Calu3 (cell line): ENCODE measurements at regions of chr6 and their contacts with region 1.

Region 1: DNA sequence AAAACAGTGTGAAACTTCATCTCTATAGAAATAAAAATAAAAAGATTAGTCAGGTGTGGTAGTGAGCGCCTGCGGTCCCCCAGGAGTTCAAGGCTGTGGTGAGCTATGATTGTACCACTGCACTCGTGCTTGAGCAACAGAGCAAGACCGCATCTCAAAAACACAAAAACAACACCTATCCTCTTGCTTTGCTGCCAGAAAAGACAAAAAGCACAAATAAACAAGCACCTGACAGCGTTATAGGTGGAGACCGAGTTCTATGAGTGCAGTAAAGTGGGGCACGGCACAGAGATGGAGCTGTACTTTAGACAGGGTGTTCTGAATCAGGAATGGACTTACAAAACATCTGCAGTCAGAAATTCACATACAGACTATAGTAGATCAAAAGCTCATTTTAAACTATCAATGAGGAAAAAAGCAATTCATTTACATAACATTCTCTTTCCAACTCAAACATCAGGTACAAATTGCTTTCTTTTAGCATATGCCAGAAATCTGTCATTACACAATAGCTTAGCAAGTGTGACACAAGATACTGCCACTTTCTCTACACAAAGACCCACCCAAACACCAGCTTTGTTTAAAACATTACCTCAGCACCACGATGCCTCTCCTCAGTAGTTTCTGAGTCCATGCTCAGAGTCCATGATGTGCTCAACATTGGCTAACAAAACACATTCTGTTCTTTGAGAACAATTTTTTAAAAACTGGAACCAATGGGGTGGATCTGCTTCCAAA is 10.1 kb downstream of the EZR start:
- DNase-seq: no peak
- H3K4me3 Mint-ChIP-seq: peak overlapping the region; percentile 85
- H3K27ac Mint-ChIP-seq: peak overlapping the region; percentile 97
- H3K4me1 Mint-ChIP-seq: peaks cover 77% of the 10 kb centered on the region
- H3K27me3 Mint-ChIP-seq: no peaks in the 10 kb centered on the region
- CTCF ChIP-seq: no peak

Region 2: GRCh38 chr6:157726892-157727628 is 1082.0 kb before region 1 on chr6:
- CTCF ChIA-PET with region 1: no interaction called
- intact Hi-C with region 1: no loop called
- DNase-seq: no peak
- H3K4me3 Mint-ChIP-seq: no peak overlapping the region
- H3K27ac Mint-ChIP-seq: peak overlapping the region; percentile 39
- H3K4me1 Mint-ChIP-seq: peaks cover 21% of the 10 kb centered on the region
- H3K27me3 Mint-ChIP-seq: no peaks in the 10 kb centered on the region
- CTCF ChIP-seq: no peak

Region 3: DNA sequence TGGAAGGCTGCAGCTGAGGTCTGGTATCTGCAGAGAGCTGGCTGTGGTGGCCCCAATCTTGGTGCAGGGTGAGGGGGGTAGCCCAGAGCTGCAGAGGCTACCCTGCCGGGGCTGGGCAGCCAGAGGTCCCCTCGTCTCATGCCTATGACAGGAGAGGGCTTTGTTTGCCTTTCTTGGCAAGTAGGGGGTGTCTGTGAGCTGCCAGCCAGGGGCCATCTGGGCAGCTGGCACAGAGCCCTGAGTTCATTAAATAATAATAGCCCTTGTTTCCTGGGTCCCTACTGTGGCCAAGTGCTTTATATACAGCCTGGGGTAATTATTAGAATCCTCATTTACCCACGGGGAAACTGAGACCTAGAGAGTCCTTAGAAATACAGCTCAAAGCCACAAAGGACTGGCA is 56.5 kb before region 1 on chr6:
- CTCF ChIA-PET with region 1: no interaction called
- intact Hi-C with region 1: no loop called
- DNase-seq: peak; percentile 70
- H3K4me3 Mint-ChIP-seq: no peak overlapping the region
- H3K27ac Mint-ChIP-seq: peak overlapping the region; percentile 54
- H3K4me1 Mint-ChIP-seq: peaks cover 33% of the 10 kb centered on the region
- H3K27me3 Mint-ChIP-seq: no peaks in the 10 kb centered on the region
- CTCF ChIP-seq: peak; percentile 23

Region 4: GRCh38 chr6:158793432-158793831 is 15.7 kb before region 1 on chr6:
- CTCF ChIA-PET with region 1: interaction called, 11 read pairs
- intact Hi-C with region 1: no loop called
- DNase-seq: no peak
- H3K4me3 Mint-ChIP-seq: peak overlapping the region; percentile 50
- H3K27ac Mint-ChIP-seq: no peak overlapping the region
- H3K4me1 Mint-ChIP-seq: peaks cover 94% of the 10 kb centered on the region
- H3K27me3 Mint-ChIP-seq: no peaks in the 10 kb centered on the region
- CTCF ChIP-seq: peak; percentile 27

Region 5: DNA sequence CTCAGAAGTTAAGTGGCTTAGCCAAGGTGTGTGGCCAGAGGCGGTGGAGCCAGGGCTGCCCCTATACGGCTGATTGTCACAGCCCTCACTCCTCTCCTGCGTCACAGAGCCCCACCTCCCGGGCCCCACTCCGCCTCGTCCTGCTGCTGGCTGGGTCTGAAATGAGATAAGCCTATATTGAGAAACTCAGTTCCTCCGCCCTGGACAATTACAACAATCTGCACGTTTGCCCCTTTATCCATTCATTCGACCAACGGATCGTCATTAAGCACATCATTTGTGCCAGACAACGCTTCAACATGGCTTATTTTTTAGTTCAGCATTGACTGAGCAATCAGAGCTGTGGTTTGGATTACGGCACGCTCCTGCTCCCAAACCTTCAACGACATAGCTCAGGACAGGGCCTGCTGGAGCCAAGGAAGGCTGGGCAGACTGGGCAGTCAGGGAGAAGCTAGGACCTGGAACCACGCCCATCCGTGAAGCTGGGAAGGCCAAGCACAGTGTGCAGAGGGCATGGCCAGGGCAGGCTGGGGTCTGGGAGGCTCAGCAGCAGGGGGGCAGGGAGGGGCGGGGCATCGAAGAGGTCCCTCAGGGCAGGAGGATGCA is 26.6 kb after region 1 on chr6:
- CTCF ChIA-PET with region 1: interaction called, 10 read pairs
- intact Hi-C with region 1: no loop called
- DNase-seq: peak; percentile 83
- H3K4me3 Mint-ChIP-seq: peak overlapping the region; percentile 66
- H3K27ac Mint-ChIP-seq: peak overlapping the region; percentile 90
- H3K4me1 Mint-ChIP-seq: peaks cover 48% of the 10 kb centered on the region
- H3K27me3 Mint-ChIP-seq: no peaks in the 10 kb centered on the region
- CTCF ChIP-seq: no peak